ENCODE measurements at regions of chr12 and their contacts with region 1.

Region 1: DNA sequence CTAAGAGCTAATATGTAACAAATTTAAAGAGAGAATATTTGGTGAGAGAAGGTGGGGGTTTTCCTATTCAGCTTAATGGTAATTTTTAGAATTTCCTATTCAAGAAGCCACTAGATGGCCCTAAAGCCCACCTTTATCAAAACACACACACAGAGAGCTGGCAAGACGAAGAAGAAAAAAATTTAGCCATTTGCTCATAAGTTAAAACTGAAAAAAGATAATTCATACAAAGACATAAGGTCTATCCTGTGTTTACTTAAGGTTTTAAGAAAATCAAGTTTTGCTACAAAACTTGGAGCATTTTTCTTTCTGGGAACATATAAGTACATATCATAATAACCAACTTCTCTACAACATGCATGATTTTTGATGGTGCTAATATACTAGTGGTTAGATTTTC is 46.8 kb upstream of the PCED1B start:
- DNase-seq: peak; percentile 33 to 65 (median 56)
- H3K4me3 ChIP-seq: no peak overlapping the region
- H3K4me3 Mint-ChIP-seq: no peak overlapping the region
- H3K27ac ChIP-seq: no peak overlapping the region
- H3K27ac Mint-ChIP-seq: peak overlapping the region in 1 of 7 donors; percentile 1
- H3K4me1 ChIP-seq: peaks cover 10% of the 10 kb centered on the region
- H3K4me1 Mint-ChIP-seq: peaks cover 8 to 16% (median 10%) of the 10 kb centered on the region in 4 donors
- H3K27me3 ChIP-seq: no peaks in the 10 kb centered on the region
- H3K27me3 Mint-ChIP-seq: no peaks in the 10 kb centered on the region

Region 2: GRCh38 chr12:46276756-46277155 is 755.9 kb before region 1 on chr12:
- CTCF ChIA-PET with region 1: no interaction called
- POLR2A ChIA-PET with region 1: no interaction called
- intact Hi-C with region 1: no loop called
- DNase-seq: no peak
- H3K4me3 ChIP-seq: no peak overlapping the region
- H3K4me3 Mint-ChIP-seq: no peak overlapping the region
- H3K27ac ChIP-seq: no peak overlapping the region
- H3K27ac Mint-ChIP-seq: peak overlapping the region in 2 of 7 donors; percentile 62 to 73
- H3K4me1 ChIP-seq: peaks cover 3% of the 10 kb centered on the region
- H3K4me1 Mint-ChIP-seq: peaks cover 4 to 14% (median 6%) of the 10 kb centered on the region in 4 donors
- H3K27me3 ChIP-seq: no peaks in the 10 kb centered on the region
- H3K27me3 Mint-ChIP-seq: no peaks in the 10 kb centered on the region

Region 3: GRCh38 chr12:47021298-47021697 is 11.3 kb before region 1 on chr12:
- CTCF ChIA-PET with region 1: interaction called, 16 read pairs
- POLR2A ChIA-PET with region 1: interaction called, 3 read pairs
- intact Hi-C with region 1: no loop called
- DNase-seq: peak in 4 of 5 donors; percentile 39 to 53 (median 50)
- H3K4me3 ChIP-seq: no peak overlapping the region
- H3K4me3 Mint-ChIP-seq: no peak overlapping the region
- H3K27ac ChIP-seq: no peak overlapping the region
- H3K27ac Mint-ChIP-seq: no peak overlapping the region
- H3K4me1 ChIP-seq: no peaks in the 10 kb centered on the region
- H3K4me1 Mint-ChIP-seq: no peaks in the 10 kb centered on the region
- H3K27me3 ChIP-seq: no peaks in the 10 kb centered on the region
- H3K27me3 Mint-ChIP-seq: peaks cover 14 to 20% of the 10 kb centered on the region in 2 donors

Region 4: GRCh38 chr12:47079468-47079980 is 46.9 kb after region 1 on chr12 and contains the starts of genes AMIGO2 and PCED1B:
- CTCF ChIA-PET with region 1: interaction called, 8 read pairs
- POLR2A ChIA-PET with region 1: interaction called, 4 read pairs
- intact Hi-C with region 1: loop called (anchors 2 kb)
- DNase-seq: peak; percentile 43 to 63 (median 51)
- H3K4me3 ChIP-seq: peak within 1 kb of the TSS; percentile 91 to 92
- H3K4me3 Mint-ChIP-seq: peak within 1 kb of the TSS; percentile 96 to 99 (median 98)
- H3K27ac ChIP-seq: peak within 1 kb of the TSS; percentile 74
- H3K27ac Mint-ChIP-seq: peak within 1 kb of the TSS; percentile 92 to 99 (median 98)
- H3K4me1 ChIP-seq: peaks cover 66% of the 10 kb centered on the region
- H3K4me1 Mint-ChIP-seq: peaks cover 52 to 83% (median 66%) of the 10 kb centered on the region in 4 donors
- H3K27me3 ChIP-seq: no peaks in the 10 kb centered on the region
- H3K27me3 Mint-ChIP-seq: peaks cover 0 to 1% of the 10 kb centered on the region in 2 donors
- total RNA-seq, gene AMIGO2: 12.8 to 13.1 TPM
- total RNA-seq, gene PCED1B: 44.3 to 49.0 TPM

Region 5: GRCh38 chr12:47312808-47313426 is 280.3 kb after region 1 on chr12:
- CTCF ChIA-PET with region 1: interaction called, 53 read pairs
- POLR2A ChIA-PET with region 1: interaction called, 15 read pairs
- intact Hi-C with region 1: no loop called
- DNase-seq: no peak
- H3K4me3 ChIP-seq: no peak overlapping the region
- H3K4me3 Mint-ChIP-seq: no peak overlapping the region
- H3K27ac ChIP-seq: no peak overlapping the region
- H3K27ac Mint-ChIP-seq: no peak overlapping the region
- H3K4me1 ChIP-seq: peaks cover 21% of the 10 kb centered on the region
- H3K4me1 Mint-ChIP-seq: peaks cover 14 to 45% (median 24%) of the 10 kb centered on the region in 4 donors
- H3K27me3 ChIP-seq: no peaks in the 10 kb centered on the region
- H3K27me3 Mint-ChIP-seq: no peaks in the 10 kb centered on the region

Region 6: DNA sequence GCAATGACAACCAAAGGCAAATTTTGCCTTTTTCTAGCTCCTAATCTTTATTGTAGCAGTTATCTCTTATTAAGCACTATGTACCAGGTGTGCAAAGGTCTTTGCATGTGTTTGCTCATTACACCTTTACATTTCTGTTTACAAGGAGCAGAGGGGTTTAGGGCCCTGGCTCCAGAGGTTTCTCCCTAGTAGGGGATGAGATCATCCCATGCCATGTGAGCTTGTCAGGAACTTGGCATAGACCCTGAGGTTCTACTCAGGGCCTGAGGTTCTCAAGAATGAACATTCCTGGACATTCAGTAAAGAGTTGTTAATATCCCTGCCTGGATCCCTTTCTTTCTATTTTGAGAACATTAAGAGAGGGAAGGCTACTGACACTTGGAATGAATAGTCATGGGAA is 381.2 kb after region 1 on chr12:
- CTCF ChIA-PET with region 1: interaction called, 40 read pairs
- POLR2A ChIA-PET with region 1: interaction called, 6 read pairs
- intact Hi-C with region 1: no loop called
- DNase-seq: no peak
- H3K4me3 ChIP-seq: no peak overlapping the region
- H3K4me3 Mint-ChIP-seq: no peak overlapping the region
- H3K27ac ChIP-seq: no peak overlapping the region
- H3K27ac Mint-ChIP-seq: no peak overlapping the region
- H3K4me1 ChIP-seq: peaks cover 29% of the 10 kb centered on the region
- H3K4me1 Mint-ChIP-seq: peaks cover 27 to 69% (median 39%) of the 10 kb centered on the region in 4 donors
- H3K27me3 ChIP-seq: no peaks in the 10 kb centered on the region
- H3K27me3 Mint-ChIP-seq: no peaks in the 10 kb centered on the region

Region 7: DNA sequence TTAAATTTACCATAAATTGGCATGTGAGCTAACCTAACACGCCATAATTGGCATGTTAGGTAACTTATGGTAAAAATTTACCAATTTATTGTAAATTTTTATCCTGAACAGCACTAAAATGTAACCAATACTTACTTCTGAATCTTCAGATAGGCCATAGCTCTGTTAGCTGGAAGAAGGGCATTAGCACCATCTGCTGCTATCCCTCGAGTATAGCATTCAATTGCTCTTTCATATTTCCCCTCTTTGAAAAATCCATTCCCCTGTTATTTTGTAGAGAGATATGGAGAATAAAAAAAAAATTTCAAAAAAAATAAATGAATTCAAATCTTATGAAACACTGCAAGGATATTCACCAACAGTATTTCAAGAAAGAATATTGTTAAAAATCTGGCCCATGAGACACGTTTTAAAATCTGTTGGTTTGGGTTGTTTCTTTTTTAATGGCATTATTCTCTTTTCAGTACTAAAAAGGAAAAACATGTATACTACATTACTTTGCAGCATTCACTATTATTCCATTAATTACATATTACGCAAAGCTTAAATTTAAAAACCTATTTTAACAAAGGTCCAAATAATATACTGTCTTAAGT is 654.1 kb after region 1 on chr12:
- CTCF ChIA-PET with region 1: interaction called, 7 read pairs
- POLR2A ChIA-PET with region 1: interaction called, 4 read pairs
- intact Hi-C with region 1: loop called (anchors 1 kb)
- DNase-seq: peak in 3 of 5 donors; percentile 22 to 36 (median 27)
- H3K4me3 ChIP-seq: no peak overlapping the region
- H3K4me3 Mint-ChIP-seq: no peak overlapping the region
- H3K27ac ChIP-seq: no peak overlapping the region
- H3K27ac Mint-ChIP-seq: no peak overlapping the region
- H3K4me1 ChIP-seq: no peaks in the 10 kb centered on the region
- H3K4me1 Mint-ChIP-seq: peaks cover 0 to 8% (median 3%) of the 10 kb centered on the region in 4 donors
- H3K27me3 ChIP-seq: no peaks in the 10 kb centered on the region
- H3K27me3 Mint-ChIP-seq: no peaks in the 10 kb centered on the region

Region 8: GRCh38 chr12:47715393-47715876 is 682.8 kb after region 1 on chr12:
- CTCF ChIA-PET with region 1: no interaction called
- POLR2A ChIA-PET with region 1: no interaction called
- intact Hi-C with region 1: no loop called
- DNase-seq: peak; percentile 74 to 81 (median 78)
- H3K4me3 ChIP-seq: no peak overlapping the region
- H3K4me3 Mint-ChIP-seq: no peak overlapping the region
- H3K27ac ChIP-seq: no peak overlapping the region
- H3K27ac Mint-ChIP-seq: peak overlapping the region in 5 of 7 donors; percentile 24 to 77 (median 65)
- H3K4me1 ChIP-seq: peaks cover 18% of the 10 kb centered on the region
- H3K4me1 Mint-ChIP-seq: peaks cover 11 to 24% (median 20%) of the 10 kb centered on the region in 4 donors
- H3K27me3 ChIP-seq: no peaks in the 10 kb centered on the region
- H3K27me3 Mint-ChIP-seq: no peaks in the 10 kb centered on the region

Region 9: GRCh38 chr12:47773062-47773857 is 740.6 kb after region 1 on chr12 and contains the start of gene SLC48A1:
- CTCF ChIA-PET with region 1: no interaction called
- POLR2A ChIA-PET with region 1: no interaction called
- intact Hi-C with region 1: no loop called
- DNase-seq: peak; percentile 63 to 83 (median 76)
- H3K4me3 ChIP-seq: peak within 1 kb of the TSS in 1 of 2 donors; percentile 62
- H3K4me3 Mint-ChIP-seq: peak within 1 kb of the TSS; percentile 84 to 94 (median 89)
- H3K27ac ChIP-seq: peak within 1 kb of the TSS; percentile 47
- H3K27ac Mint-ChIP-seq: peak within 1 kb of the TSS; percentile 77 to 91 (median 84)
- H3K4me1 ChIP-seq: peaks cover 16% of the 10 kb centered on the region
- H3K4me1 Mint-ChIP-seq: peaks cover 5 to 23% (median 14%) of the 10 kb centered on the region in 4 donors
- H3K27me3 ChIP-seq: no peaks in the 10 kb centered on the region
- H3K27me3 Mint-ChIP-seq: no peaks in the 10 kb centered on the region
- total RNA-seq, gene SLC48A1: 12.1 to 12.3 TPM

Measured in CD4-positive, alpha-beta memory T cell (primary cell).